Naive thymus-derived CD4-positive, alpha-beta T cell (primary cell): ENCODE measurements at regions of chr18 and their contacts with region 1.

Region 1: GRCh38 chr18:2547477-2548087 is 23.7 kb downstream of the METTL4 start:
- DNase-seq: peak in 7 of 9 donors; percentile 13 to 50 (median 37)
- ATAC-seq: peak; percentile 72
- H3K4me3 ChIP-seq: no peak overlapping the region
- H3K4me3 Mint-ChIP-seq: no peak overlapping the region
- H3K27ac ChIP-seq: no peak overlapping the region
- H3K27ac Mint-ChIP-seq: peak overlapping the region in 3 of 9 donors; percentile 0 to 10 (median 6)
- H3K4me1 ChIP-seq: no peaks in the 10 kb centered on the region
- H3K4me1 Mint-ChIP-seq: peaks cover 3 to 33% (median 23%) of the 10 kb centered on the region in 7 donors
- H3K27me3 ChIP-seq: no peaks in the 10 kb centered on the region
- H3K27me3 Mint-ChIP-seq: no peaks in the 10 kb centered on the region

Region 2: DNA sequence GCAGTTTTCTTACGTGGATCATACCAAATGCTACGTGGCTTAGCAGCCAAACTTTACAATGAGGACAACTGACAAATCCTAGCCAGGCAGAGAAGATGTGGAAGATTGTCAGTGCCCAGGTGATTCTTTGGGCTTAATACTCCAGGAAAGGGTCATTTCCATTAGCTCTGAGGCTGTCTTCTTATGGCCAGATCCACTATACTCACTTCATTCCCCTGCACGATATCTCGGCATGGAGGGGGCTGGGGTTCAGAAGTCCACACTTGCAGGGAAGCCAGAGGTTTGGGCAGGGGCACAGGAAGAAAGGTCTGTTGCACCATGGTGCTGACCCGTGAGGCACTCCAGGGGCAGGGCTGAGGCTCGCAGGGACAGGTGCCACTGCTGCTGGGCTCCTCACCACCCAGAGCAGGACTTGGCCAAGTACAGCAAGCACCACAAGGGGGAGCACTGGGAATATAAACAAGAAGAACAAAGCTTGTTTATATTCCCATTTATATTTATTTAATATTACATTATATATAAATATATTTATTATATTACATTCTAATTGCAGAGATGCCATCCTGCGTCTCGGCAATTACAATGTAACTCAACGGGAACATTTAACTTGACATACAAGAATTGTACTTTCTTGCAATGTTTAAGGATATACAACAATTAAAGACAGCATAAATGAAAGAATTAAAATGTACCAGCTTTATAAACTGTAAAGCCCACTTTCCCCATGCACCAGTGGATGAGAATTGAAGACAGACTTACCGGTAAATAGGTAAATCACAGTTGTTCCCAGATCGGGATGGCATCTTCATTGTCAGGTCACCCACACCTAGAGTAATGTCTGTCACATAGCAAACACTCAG is 1923.6 kb before region 1 on chr18:
- CTCF ChIA-PET with region 1: no interaction called
- POLR2A ChIA-PET with region 1: no interaction called
- intact Hi-C with region 1: loop called in 1 of 2 experiments (anchors 10 kb)
- DNase-seq: peak; percentile 10 to 59 (median 37)
- ATAC-seq: peak; percentile 78
- H3K4me3 ChIP-seq: no peak overlapping the region
- H3K4me3 Mint-ChIP-seq: no peak overlapping the region
- H3K27ac ChIP-seq: no peak overlapping the region
- H3K27ac Mint-ChIP-seq: no peak overlapping the region
- H3K4me1 ChIP-seq: no peaks in the 10 kb centered on the region
- H3K4me1 Mint-ChIP-seq: peaks cover 0 to 2% (median 0%) of the 10 kb centered on the region in 7 donors
- H3K27me3 ChIP-seq: no peaks in the 10 kb centered on the region
- H3K27me3 Mint-ChIP-seq: peaks cover 0 to 48% (median 5%) of the 10 kb centered on the region in 5 donors

Region 3: DNA sequence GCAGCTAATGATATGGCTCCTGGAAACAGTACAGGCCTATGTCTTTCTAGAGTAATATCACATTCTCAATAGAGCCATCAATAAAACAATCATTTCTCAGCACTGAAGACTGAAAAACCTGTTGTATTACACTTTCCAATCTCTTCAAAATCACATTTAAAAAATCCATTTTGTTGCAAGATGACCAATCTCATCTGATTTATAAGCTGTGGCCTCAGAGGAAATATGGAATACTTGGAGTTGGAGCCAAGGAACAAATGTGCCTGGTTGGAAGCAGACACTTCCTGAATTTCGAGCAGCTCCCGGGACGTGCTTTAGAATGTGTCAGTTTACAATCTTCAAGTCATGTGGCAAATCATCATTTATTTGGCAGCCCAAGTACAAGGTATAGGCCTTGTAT is 1528.4 kb before region 1 on chr18:
- CTCF ChIA-PET with region 1: no interaction called
- POLR2A ChIA-PET with region 1: no interaction called
- intact Hi-C with region 1: no loop called
- DNase-seq: no peak
- ATAC-seq: no peak
- H3K4me3 ChIP-seq: no peak overlapping the region
- H3K4me3 Mint-ChIP-seq: no peak overlapping the region
- H3K27ac ChIP-seq: no peak overlapping the region
- H3K27ac Mint-ChIP-seq: no peak overlapping the region
- H3K4me1 ChIP-seq: no peaks in the 10 kb centered on the region
- H3K4me1 Mint-ChIP-seq: no peaks in the 10 kb centered on the region
- H3K27me3 ChIP-seq: no peaks in the 10 kb centered on the region
- H3K27me3 Mint-ChIP-seq: peaks cover 0 to 16% (median 11%) of the 10 kb centered on the region in 5 donors

Region 4: DNA sequence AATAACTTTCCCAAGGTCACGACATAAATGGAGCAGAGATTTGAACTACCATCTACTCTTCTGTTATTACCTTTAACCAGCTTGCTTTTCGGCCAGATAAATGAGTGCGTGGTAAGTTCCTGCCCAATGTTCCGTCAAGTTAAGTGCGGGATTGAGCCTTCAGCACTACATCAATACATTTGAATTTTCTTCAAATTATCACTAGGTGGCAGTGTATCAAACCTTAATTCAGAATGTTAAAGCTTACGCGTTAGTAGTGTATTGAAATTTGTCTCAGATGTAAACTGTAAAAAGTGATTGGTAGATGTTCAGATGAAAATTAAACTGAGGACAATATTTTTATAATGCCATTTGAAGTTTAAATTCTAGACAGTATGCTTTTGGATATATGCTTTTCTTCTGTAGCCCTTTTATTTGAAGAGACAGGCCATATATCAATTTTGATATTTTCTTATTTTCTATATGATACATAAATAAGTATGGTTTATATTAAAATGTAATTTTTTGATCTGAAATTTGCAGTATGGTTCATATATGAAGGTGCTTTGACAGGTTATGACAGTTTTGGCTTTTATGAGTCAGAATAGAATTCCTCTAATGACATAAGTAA is 961.6 kb before region 1 on chr18:
- CTCF ChIA-PET with region 1: interaction called, 8 read pairs
- POLR2A ChIA-PET with region 1: no interaction called
- intact Hi-C with region 1: loop called (anchors 1 to 2 kb)
- DNase-seq: peak in 1 of 9 donors; percentile 22
- ATAC-seq: peak; percentile 37
- H3K4me3 ChIP-seq: no peak overlapping the region
- H3K4me3 Mint-ChIP-seq: no peak overlapping the region
- H3K27ac ChIP-seq: no peak overlapping the region
- H3K27ac Mint-ChIP-seq: no peak overlapping the region
- H3K4me1 ChIP-seq: no peaks in the 10 kb centered on the region
- H3K4me1 Mint-ChIP-seq: no peaks in the 10 kb centered on the region
- H3K27me3 ChIP-seq: no peaks in the 10 kb centered on the region
- H3K27me3 Mint-ChIP-seq: peaks cover 2 to 31% (median 8%) of the 10 kb centered on the region in 5 donors

Region 5: GRCh38 chr18:2337552-2338141 is 209.9 kb before region 1 on chr18:
- CTCF ChIA-PET with region 1: interaction called, 21 read pairs
- POLR2A ChIA-PET with region 1: no interaction called
- intact Hi-C with region 1: loop called (anchors 1 kb)
- DNase-seq: peak in 8 of 9 donors; percentile 1 to 35 (median 20)
- ATAC-seq: peak; percentile 71
- H3K4me3 ChIP-seq: no peak overlapping the region
- H3K4me3 Mint-ChIP-seq: no peak overlapping the region
- H3K27ac ChIP-seq: no peak overlapping the region
- H3K27ac Mint-ChIP-seq: no peak overlapping the region
- H3K4me1 ChIP-seq: no peaks in the 10 kb centered on the region
- H3K4me1 Mint-ChIP-seq: peaks cover 0 to 5% (median 0%) of the 10 kb centered on the region in 7 donors
- H3K27me3 ChIP-seq: peaks cover 0 to under 1% of the 10 kb centered on the region in 2 donors
- H3K27me3 Mint-ChIP-seq: peaks cover 14 to 36% (median 29%) of the 10 kb centered on the region in 5 donors

Region 6: GRCh38 chr18:2641638-2642037 is 94.1 kb after region 1 on chr18:
- CTCF ChIA-PET with region 1: interaction called, 5 read pairs
- POLR2A ChIA-PET with region 1: interaction called, 15 read pairs
- intact Hi-C with region 1: loop called in 1 of 2 experiments (anchors 1 kb)
- DNase-seq: peak in 7 of 9 donors; percentile 38 to 58 (median 52)
- ATAC-seq: peak; percentile 18
- H3K4me3 ChIP-seq: peak overlapping the region; percentile 36
- H3K4me3 Mint-ChIP-seq: peak overlapping the region in 9 of 10 donors; percentile 73 to 87 (median 84)
- H3K27ac ChIP-seq: peak overlapping the region; percentile 83
- H3K27ac Mint-ChIP-seq: peak overlapping the region in 3 of 9 donors; percentile 91 to 99 (median 95)
- H3K4me1 ChIP-seq: peaks cover 70 to 73% of the 10 kb centered on the region in 2 donors
- H3K4me1 Mint-ChIP-seq: peaks cover 0 to 54% (median 47%) of the 10 kb centered on the region in 7 donors
- H3K27me3 ChIP-seq: no peaks in the 10 kb centered on the region
- H3K27me3 Mint-ChIP-seq: no peaks in the 10 kb centered on the region